Head of caudate nucleus (tissue), 42 donors: ENCODE measurements at regions of chr17 and their contacts with region 1.

Region 1: GRCh38 chr17:3012926-3013581 is 50.4 kb downstream of the OR1D5 start:
- DNase-seq: peak; percentile 35 to 89 (median 73)

Region 2: GRCh38 chr17:2828397-2829038 is 184.5 kb before region 1 on chr17:
- intact Hi-C with region 1: loop called (anchors 10 kb)
- DNase-seq: peak in 41 of 42 donors; percentile 38 to 90 (median 74)

Region 3: GRCh38 chr17:3167574-3167973 is 154.5 kb after region 1 on chr17:
- intact Hi-C with region 1: no loop called
- DNase-seq: peak in 1 of 42 donors; percentile 3